Left cardiac atrium (tissue), 4 donors: ENCODE measurements at regions of chr3 and their contacts with region 1.

Region 1: GRCh38 chr3:73114711-73115110 is 53.3 kb downstream of the EBLN2 start:
- DNase-seq: no peak
- ATAC-seq: no peak

Region 2: GRCh38 chr3:73490453-73491286 is 376.0 kb after region 1 on chr3:
- intact Hi-C with region 1: loop called in 1 of 2 experiments (anchors 5 kb)
- DNase-seq: peak; percentile 41
- ATAC-seq: peak; percentile 70 to 73